Heart right ventricle (tissue), 16 donors: ENCODE measurements at regions of chr6 and their contacts with region 1.

Region 1: DNA sequence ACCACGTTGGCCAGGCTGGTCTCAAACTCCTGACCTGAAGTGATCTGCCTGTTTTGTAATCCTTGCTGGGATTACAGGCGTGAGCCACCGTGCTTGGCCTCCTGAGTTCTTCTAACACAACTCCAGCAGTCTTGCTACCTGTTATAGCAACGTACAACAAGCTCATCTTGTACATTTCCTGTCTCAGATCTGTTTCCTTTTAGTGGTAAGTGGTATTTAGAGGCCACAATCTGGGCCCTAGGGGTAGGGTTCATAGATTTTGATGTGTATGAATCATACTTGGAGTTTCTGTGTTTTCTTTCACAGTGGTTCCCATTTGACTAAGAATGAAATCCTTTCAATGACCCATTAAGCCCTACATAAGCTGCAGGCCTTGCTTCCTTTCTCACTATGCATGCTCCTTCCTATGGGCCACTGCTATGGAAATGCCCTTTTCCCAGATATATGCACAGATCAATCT is 27.1 kb upstream of the SYNCRIP start:
- DNase-seq: no peak
- ATAC-seq: no peak
- H3K4me3 ChIP-seq: no peak overlapping the region
- H3K27ac ChIP-seq: peak overlapping the region in 1 of 10 donors; percentile 66
- H3K4me1 ChIP-seq: peaks cover 0 to 39% (median 14%) of the 10 kb centered on the region in 9 donors
- H3K27me3 ChIP-seq: no peaks in the 10 kb centered on the region
- CTCF ChIP-seq: no peak

Region 2: GRCh38 chr6:85650606-85651005 is 19.2 kb before region 1 on chr6:
- intact Hi-C with region 1: loop called in 1 of 10 experiments (anchors 2 kb)
- DNase-seq: no peak
- ATAC-seq: no peak
- H3K4me3 ChIP-seq: no peak overlapping the region
- H3K27ac ChIP-seq: no peak overlapping the region
- H3K4me1 ChIP-seq: no peaks in the 10 kb centered on the region
- H3K27me3 ChIP-seq: no peaks in the 10 kb centered on the region
- CTCF ChIP-seq: no peak